Activated naive CD4-positive, alpha-beta T cell treated with anti-CD3 and anti-CD28 coated beads, Interleukin-2, amount 10 ng/mL, durations not matched to agents 7 days and 5 days (primary cell): ENCODE measurements at regions of chr13 and their contacts with region 1.

Region 1: GRCh38 chr13:30978981-30979956 is 46.8 kb downstream of the TEX26 start:
- DNase-seq: peak; percentile 61
- H3K4me3 Mint-ChIP-seq: no peak overlapping the region
- H3K27ac Mint-ChIP-seq: no peak overlapping the region
- H3K4me1 Mint-ChIP-seq: no peaks in the 10 kb centered on the region
- H3K27me3 Mint-ChIP-seq: peaks cover 36% of the 10 kb centered on the region

Region 2: DNA sequence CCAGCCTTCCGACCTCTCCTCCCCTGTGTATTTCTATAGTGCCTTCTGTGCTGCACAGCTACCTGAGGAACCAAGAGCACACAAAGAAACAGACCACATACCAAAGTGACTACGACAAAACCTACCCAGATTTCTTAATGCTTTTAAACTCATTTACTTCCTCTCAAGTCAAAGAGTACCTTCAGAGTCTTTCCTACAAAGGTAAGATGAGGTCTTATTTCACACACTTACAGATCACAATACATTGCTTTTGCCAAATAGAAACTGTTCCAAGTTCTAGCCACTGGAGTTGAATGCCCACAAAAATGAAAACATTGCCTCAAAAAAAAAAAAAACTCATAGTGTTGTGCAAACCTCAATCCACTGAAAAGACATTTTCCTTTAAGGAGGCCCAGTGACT is 10.4 kb before region 1 on chr13:
- CTCF ChIA-PET with region 1: interaction called, 15 read pairs
- DNase-seq: no peak
- H3K4me3 Mint-ChIP-seq: no peak overlapping the region
- H3K27ac Mint-ChIP-seq: no peak overlapping the region
- H3K4me1 Mint-ChIP-seq: no peaks in the 10 kb centered on the region
- H3K27me3 Mint-ChIP-seq: peaks cover 62% of the 10 kb centered on the region

Region 3: GRCh38 chr13:31044377-31045285 is 65.4 kb after region 1 on chr13:
- CTCF ChIA-PET with region 1: interaction called, 47 read pairs
- DNase-seq: peak; percentile 89
- H3K4me3 Mint-ChIP-seq: no peak overlapping the region
- H3K27ac Mint-ChIP-seq: peak overlapping the region; percentile 73
- H3K4me1 Mint-ChIP-seq: peaks cover 55% of the 10 kb centered on the region
- H3K27me3 Mint-ChIP-seq: peaks cover 24% of the 10 kb centered on the region